Panc1 (cell line): ENCODE measurements at regions of chrX and their contacts with region 1.

Region 1: DNA sequence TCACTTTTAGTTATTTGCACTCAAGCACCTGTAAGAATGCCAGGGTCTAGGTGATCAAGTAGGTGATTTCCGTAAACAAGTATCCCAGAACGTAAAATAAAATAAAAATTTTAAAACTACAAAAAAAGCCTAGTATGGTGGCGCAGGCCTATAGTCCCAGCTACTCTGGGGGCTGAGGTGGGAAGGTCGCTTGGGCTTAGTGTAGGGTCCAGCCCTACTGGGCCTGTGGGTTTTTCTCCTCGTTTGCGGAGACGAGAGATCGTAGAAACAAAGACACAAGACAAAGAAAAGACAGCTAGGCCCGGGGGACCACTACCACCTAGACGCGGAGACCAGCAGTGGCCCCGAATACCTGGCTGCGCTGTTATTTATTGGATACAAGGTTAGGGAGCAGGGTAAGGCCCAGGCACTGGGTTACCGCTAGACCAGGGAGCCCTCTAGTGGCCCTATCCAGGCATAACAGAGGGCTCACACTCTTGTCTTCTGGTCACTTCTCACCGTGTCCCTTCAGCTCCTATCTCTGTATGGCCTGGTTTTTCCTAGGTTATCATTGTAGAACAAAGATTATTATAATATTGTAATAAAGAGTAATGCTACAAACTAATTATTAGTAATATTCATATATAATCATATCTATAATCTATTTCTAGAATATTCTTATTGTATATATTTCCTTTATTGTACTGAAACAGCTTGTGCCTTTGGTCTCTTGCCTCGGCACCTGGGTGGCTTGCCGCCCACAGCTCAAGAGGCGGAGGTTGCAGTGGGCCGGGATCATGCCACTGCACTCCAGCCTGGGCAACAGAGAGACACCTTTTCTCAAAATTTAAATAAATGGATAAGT is 38.4 kb downstream of the SAGE1 start:
- DNase-seq: peak; percentile 38
- ATAC-seq: peak; percentile 96
- H3K4me3 ChIP-seq: no peak overlapping the region
- H3K27ac ChIP-seq: no peak overlapping the region
- H3K4me1 ChIP-seq: no peaks in the 10 kb centered on the region
- H3K27me3 ChIP-seq: no peaks in the 10 kb centered on the region
- CTCF ChIP-seq: peak; percentile 89

Region 2: DNA sequence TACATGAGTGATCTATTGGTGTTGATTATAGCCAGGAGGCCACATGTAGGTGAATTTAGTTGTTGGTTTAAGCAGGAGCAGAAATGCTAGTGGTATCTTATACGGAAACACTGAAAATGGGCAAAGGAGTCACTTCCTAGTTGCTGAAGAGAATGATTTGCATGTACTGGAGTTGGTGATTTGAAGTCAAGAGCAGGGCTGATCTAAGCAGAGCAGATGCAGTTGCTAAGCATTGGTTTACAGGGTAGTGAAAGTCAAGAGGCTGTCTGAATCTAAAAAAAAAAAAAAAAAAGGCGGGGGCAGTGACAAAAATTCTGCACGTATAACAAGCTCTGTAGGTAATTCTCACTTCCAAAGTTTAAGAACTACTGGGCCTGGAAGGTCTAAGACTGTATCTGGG is 1562.3 kb before region 1 on chrX:
- CTCF ChIA-PET with region 1: no interaction called
- POLR2A ChIA-PET with region 1: no interaction called
- in situ Hi-C with region 1: no loop called
- intact Hi-C with region 1: no loop called
- DNase-seq: no peak
- ATAC-seq: no peak
- H3K4me3 ChIP-seq: no peak overlapping the region
- H3K27ac ChIP-seq: no peak overlapping the region
- H3K4me1 ChIP-seq: peaks cover 2% of the 10 kb centered on the region
- H3K27me3 ChIP-seq: no peaks in the 10 kb centered on the region
- CTCF ChIP-seq: no peak

Region 3: GRCh38 chrX:135632353-135632752 is 299.5 kb before region 1 on chrX:
- CTCF ChIA-PET with region 1: no interaction called
- POLR2A ChIA-PET with region 1: no interaction called
- in situ Hi-C with region 1: no loop called
- intact Hi-C with region 1: loop called (anchors 5 kb)
- DNase-seq: no peak
- ATAC-seq: no peak
- H3K4me3 ChIP-seq: no peak overlapping the region
- H3K27ac ChIP-seq: no peak overlapping the region
- H3K4me1 ChIP-seq: no peaks in the 10 kb centered on the region
- H3K27me3 ChIP-seq: peaks cover 8% of the 10 kb centered on the region
- CTCF ChIP-seq: peak; percentile 28; the same call in 1 of the 2 replicates

Region 4: DNA sequence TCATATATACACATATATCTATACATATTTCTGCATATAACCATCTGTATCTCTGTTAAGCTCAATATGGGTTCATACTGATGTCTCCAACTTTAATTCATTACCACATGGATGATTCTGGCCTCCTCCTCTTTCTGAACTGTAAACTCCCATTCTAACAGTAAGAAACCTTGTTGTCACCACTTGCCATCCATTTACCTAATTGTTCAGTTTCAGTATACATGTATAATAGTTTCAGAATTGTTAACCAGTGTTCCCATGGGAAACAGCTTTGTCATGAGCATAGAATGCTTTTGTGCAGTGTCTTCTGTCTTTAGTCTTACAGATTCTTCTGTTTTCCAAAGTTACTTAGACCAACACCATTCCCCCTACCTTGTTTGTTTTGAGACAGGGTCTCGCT is 89.3 kb after region 1 on chrX:
- CTCF ChIA-PET with region 1: no interaction called
- POLR2A ChIA-PET with region 1: no interaction called
- in situ Hi-C with region 1: no loop called
- intact Hi-C with region 1: no loop called
- DNase-seq: no peak
- ATAC-seq: no peak
- H3K4me3 ChIP-seq: no peak overlapping the region
- H3K27ac ChIP-seq: no peak overlapping the region
- H3K4me1 ChIP-seq: no peaks in the 10 kb centered on the region
- H3K27me3 ChIP-seq: no peaks in the 10 kb centered on the region
- CTCF ChIP-seq: no peak